GM23248 (cell line): ENCODE measurements at regions of chr17 and their contacts with region 1.

Region 1: GRCh38 chr17:9594065-9594464 is 17.6 kb downstream of the CFAP52 start:
- DNase-seq: no peak
- H3K4me3 ChIP-seq: no peak overlapping the region
- H3K27ac ChIP-seq: no peak overlapping the region
- H3K4me1 ChIP-seq: no peaks in the 10 kb centered on the region
- H3K27me3 ChIP-seq: no peaks in the 10 kb centered on the region

Region 2: GRCh38 chr17:9016941-9017552 is 577.0 kb before region 1 on chr17:
- in situ Hi-C with region 1: no loop called
- DNase-seq: no peak
- H3K4me3 ChIP-seq: no peak overlapping the region
- H3K27ac ChIP-seq: no peak overlapping the region
- H3K4me1 ChIP-seq: no peaks in the 10 kb centered on the region
- H3K27me3 ChIP-seq: peaks cover 22% of the 10 kb centered on the region

Region 3: GRCh38 chr17:9644910-9645751 is 51.1 kb after region 1 on chr17 and contains the start of gene USP43:
- in situ Hi-C with region 1: loop called (anchors 5 kb)
- DNase-seq: peak; percentile 31
- H3K4me3 ChIP-seq: peak within 1 kb of the TSS; percentile 55
- H3K27ac ChIP-seq: no peak within 1 kb of the TSS
- H3K4me1 ChIP-seq: peaks cover 11% of the 10 kb centered on the region; the same call in 1 of the 2 replicates
- H3K27me3 ChIP-seq: peaks cover 14% of the 10 kb centered on the region
- total RNA-seq, gene USP43: 0.25 TPM in 1 of 2 replicates, not detected in the other